PC-9 (cell line): ENCODE measurements at regions of chr5 and their contacts with region 1.

Region 1: DNA sequence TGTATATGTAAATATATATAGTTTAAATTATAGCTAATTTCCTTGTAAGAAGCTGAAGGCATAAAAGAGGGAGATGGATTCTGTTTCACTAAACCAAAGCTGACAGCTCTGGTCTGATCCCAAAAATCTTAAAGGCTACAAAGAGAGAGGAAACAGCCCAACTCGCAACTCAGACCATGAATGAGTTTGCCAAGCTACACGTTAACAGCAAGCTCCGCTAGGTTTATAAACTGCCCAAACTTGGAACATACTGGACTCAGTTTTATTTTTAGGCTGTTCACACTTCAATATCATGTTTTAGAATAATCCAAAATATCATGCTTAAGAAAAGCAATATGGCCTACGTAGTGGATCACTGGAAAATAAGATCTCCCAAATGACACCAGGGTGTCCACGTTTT is 318.3 kb upstream of the RPS23 start:
- DNase-seq: no peak
- H3K4me3 ChIP-seq: no peak overlapping the region
- H3K27ac ChIP-seq: no peak overlapping the region
- H3K4me1 ChIP-seq: no peaks in the 10 kb centered on the region
- H3K27me3 ChIP-seq: no peaks in the 10 kb centered on the region
- CTCF ChIP-seq: no peak

Region 2: DNA sequence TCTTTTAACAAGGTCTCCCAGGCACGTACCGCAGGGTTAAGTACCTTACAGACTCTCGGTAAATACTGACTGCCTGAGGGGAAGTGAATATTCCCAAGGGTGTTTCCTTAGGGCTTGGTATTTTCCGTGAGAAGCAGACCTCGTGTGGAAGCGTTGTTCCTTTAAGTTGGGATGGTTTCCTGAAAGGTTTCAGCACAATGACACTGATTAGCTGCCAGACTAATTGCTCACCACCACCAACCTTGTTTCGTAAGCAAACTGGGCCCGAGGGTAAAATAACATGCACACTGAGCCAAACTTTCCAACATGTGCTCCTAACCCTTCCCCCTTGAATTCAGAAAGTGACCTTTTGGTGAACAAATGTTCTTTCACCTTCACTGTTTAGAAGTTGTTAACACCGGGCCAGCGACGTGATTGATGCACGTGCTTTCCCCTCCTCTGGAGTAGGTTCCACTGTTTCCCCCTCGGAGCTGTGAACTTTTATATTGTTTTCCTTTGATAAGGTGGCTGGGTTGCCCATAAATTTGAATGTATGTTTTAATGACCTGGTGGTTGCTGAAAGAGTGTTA is 190.2 kb before region 1 on chr5:
- CTCF ChIA-PET with region 1: interaction called, 14 read pairs
- POLR2A ChIA-PET with region 1: no interaction called
- intact Hi-C with region 1: no loop called
- DNase-seq: peak; percentile 53 to 94
- H3K4me3 ChIP-seq: peak overlapping the region; percentile 35; the same call in 1 of the 2 replicates
- H3K27ac ChIP-seq: peak overlapping the region; percentile 99
- H3K4me1 ChIP-seq: peaks cover 33% of the 10 kb centered on the region
- H3K27me3 ChIP-seq: no peaks in the 10 kb centered on the region
- CTCF ChIP-seq: no peak